CD4-positive, alpha-beta T cell (primary cell): ENCODE measurements at regions of chr19 and their contacts with region 1.

Region 1: GRCh38 chr19:1884719-1885334 is 469 bp downstream of the ABHD17A start:
- DNase-seq: peak in 2 of 14 experiments; percentile 40 to 55
- ATAC-seq: no peak
- H3K4me3 ChIP-seq: peak overlapping the region; percentile 100
- H3K4me3 Mint-ChIP-seq: peak overlapping the region; percentile 99
- H3K27ac ChIP-seq: peak overlapping the region; percentile 90 to 94
- H3K27ac Mint-ChIP-seq: peak overlapping the region; percentile 100
- H3K4me1 ChIP-seq: peaks cover 48% of the 10 kb centered on the region
- H3K4me1 Mint-ChIP-seq: peaks cover 40% of the 10 kb centered on the region
- H3K27me3 ChIP-seq: no peaks in the 10 kb centered on the region
- H3K27me3 Mint-ChIP-seq: no peaks in the 10 kb centered on the region
- CTCF ChIP-seq: no peak

Region 2: DNA sequence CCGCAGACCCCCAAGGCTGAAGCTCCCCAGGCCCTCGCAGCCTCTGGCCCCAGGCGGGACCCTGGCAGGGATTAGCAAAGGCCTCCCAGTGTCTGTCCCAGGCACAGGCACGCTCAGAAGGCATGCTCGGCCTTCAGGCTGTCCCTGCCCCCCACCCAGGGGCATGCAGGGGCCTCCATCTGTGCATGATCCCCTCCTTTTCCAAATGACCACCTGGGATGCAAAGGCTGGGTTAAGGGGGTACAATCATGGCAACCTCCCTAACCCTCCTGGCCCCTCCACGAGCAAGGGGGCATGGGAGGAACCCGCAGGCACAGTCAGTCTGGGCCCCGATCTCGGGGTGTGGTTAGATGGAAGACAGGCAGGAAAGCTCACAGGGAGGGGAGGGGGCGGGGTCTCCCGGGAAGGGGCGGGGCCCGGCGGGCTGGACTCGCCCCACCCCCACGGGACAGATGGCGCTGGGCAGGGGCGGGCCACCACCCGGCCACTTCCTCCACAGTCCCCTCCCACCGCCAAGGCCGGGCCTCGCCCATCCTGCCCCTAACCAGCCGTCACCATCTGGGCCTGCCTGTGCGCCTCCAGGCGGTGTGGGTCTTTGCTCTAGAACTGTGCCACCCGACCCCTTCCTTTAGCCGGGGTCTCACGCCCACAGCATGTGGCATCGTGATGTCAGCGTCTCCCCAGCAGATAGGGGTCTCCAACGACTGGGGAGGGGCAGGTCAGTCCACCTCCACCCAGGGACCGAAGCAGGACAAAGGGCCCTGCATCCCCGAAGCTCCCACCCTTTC is 29.6 kb before region 1 on chr19:
- CTCF ChIA-PET with region 1: no interaction called
- POLR2A ChIA-PET with region 1: interaction called, 11 read pairs
- intact Hi-C with region 1: no loop called
- DNase-seq: peak; percentile 61 to 95 (median 82)
- ATAC-seq: peak; percentile 56
- H3K4me3 ChIP-seq: peak overlapping the region; percentile 61
- H3K4me3 Mint-ChIP-seq: peak overlapping the region; percentile 91
- H3K27ac ChIP-seq: peak overlapping the region; percentile 71 to 77
- H3K27ac Mint-ChIP-seq: peak overlapping the region; percentile 96
- H3K4me1 ChIP-seq: peaks cover 89% of the 10 kb centered on the region
- H3K4me1 Mint-ChIP-seq: peaks cover 64% of the 10 kb centered on the region
- H3K27me3 ChIP-seq: no peaks in the 10 kb centered on the region
- H3K27me3 Mint-ChIP-seq: no peaks in the 10 kb centered on the region
- CTCF ChIP-seq: no peak

Region 3: DNA sequence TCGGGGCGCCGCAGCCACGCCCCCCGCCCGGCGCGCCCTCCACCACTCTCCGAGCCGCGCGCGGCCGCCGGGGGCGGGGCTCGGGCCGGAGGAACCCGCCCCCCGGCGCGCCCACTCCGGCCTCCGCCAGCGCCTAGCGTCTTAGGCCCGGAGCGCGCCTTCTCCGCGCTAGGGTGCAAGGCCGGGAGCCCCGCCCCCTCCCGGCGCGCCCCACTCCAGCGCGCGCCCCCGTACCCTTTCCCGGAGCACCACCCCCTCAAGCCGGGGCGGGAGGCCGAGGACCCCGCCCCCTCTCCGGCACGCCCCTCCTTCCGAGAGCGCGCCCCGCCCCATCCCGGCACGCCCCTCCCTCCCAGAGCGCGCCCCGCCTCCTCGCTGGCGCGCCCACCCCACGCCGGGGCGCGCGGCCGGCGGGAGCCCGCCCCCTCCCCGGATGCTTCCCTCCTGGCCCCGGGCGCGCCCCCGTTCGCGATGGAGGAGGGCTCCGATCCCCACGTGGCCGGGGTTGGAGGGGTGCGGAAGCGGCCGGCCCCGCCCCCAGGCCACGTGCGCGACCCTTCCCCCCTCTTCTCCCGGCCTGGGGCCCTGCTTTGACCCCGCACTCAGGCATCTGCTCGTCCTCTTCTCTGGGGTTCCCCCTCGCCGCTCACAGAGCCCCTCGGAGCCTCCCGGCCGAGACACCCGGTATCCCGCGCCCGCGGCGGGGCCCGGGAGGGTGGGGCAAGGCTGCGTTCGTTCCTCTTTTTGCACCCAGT is 20.9 kb before region 1 on chr19:
- CTCF ChIA-PET with region 1: interaction called, 3 read pairs
- POLR2A ChIA-PET with region 1: interaction called, 9 read pairs
- intact Hi-C with region 1: loop called in 1 of 2 experiments (anchors 1 kb)
- DNase-seq: peak; percentile 83 to 97 (median 92)
- ATAC-seq: peak; percentile 66
- H3K4me3 ChIP-seq: peak overlapping the region; percentile 83
- H3K4me3 Mint-ChIP-seq: peak overlapping the region; percentile 90
- H3K27ac ChIP-seq: peak overlapping the region; percentile 67 to 89
- H3K27ac Mint-ChIP-seq: peak overlapping the region; percentile 63
- H3K4me1 ChIP-seq: peaks cover 47% of the 10 kb centered on the region
- H3K4me1 Mint-ChIP-seq: peaks cover 41% of the 10 kb centered on the region
- H3K27me3 ChIP-seq: no peaks in the 10 kb centered on the region
- H3K27me3 Mint-ChIP-seq: no peaks in the 10 kb centered on the region
- CTCF ChIP-seq: no peak

Region 4: GRCh38 chr19:1896508-1896907 is 11.7 kb after region 1 on chr19:
- CTCF ChIA-PET with region 1: interaction called, 12 read pairs
- POLR2A ChIA-PET with region 1: interaction called, 29 read pairs
- intact Hi-C with region 1: loop called in 1 of 2 experiments (anchors 1 kb)
- DNase-seq: no peak
- ATAC-seq: no peak
- H3K4me3 ChIP-seq: no peak overlapping the region
- H3K4me3 Mint-ChIP-seq: peak overlapping the region; percentile 54
- H3K27ac ChIP-seq: no peak overlapping the region
- H3K27ac Mint-ChIP-seq: peak overlapping the region; percentile 88
- H3K4me1 ChIP-seq: peaks cover 40% of the 10 kb centered on the region
- H3K4me1 Mint-ChIP-seq: peaks cover 26% of the 10 kb centered on the region
- H3K27me3 ChIP-seq: no peaks in the 10 kb centered on the region
- H3K27me3 Mint-ChIP-seq: no peaks in the 10 kb centered on the region
- CTCF ChIP-seq: no peak

Region 5: GRCh38 chr19:1905071-1905862 is 20.4 kb after region 1 on chr19 and contains the starts of genes ADAT3 and SCAMP4:
- CTCF ChIA-PET with region 1: no interaction called
- POLR2A ChIA-PET with region 1: interaction called, 5 read pairs
- intact Hi-C with region 1: loop called in 1 of 2 experiments (anchors 1 kb)
- DNase-seq: peak; percentile 97 to 99 (median 99)
- ATAC-seq: peak; percentile 98
- H3K4me3 ChIP-seq: peak within 1 kb of the TSS; percentile 65
- H3K4me3 Mint-ChIP-seq: peak within 1 kb of the TSS; percentile 93
- H3K27ac ChIP-seq: peak within 1 kb of the TSS; percentile 72
- H3K27ac Mint-ChIP-seq: peak within 1 kb of the TSS; percentile 78
- H3K4me1 ChIP-seq: peaks cover 51% of the 10 kb centered on the region
- H3K4me1 Mint-ChIP-seq: peaks cover 40% of the 10 kb centered on the region
- H3K27me3 ChIP-seq: no peaks in the 10 kb centered on the region
- H3K27me3 Mint-ChIP-seq: no peaks in the 10 kb centered on the region
- CTCF ChIP-seq: no peak
- total RNA-seq, gene ADAT3: 7.9 to 8.2 TPM
- total RNA-seq, gene SCAMP4: 12.7 to 15.4 TPM

Region 6: GRCh38 chr19:2084993-2085720 is 200.3 kb after region 1 on chr19:
- CTCF ChIA-PET with region 1: no interaction called
- POLR2A ChIA-PET with region 1: no interaction called
- intact Hi-C with region 1: loop called in 1 of 2 experiments (anchors 5 kb)
- DNase-seq: peak; percentile 83 to 99 (median 92)
- ATAC-seq: peak; percentile 59
- H3K4me3 ChIP-seq: peak overlapping the region; percentile 99
- H3K4me3 Mint-ChIP-seq: peak overlapping the region; percentile 93
- H3K27ac ChIP-seq: peak overlapping the region; percentile 97 to 98
- H3K27ac Mint-ChIP-seq: peak overlapping the region; percentile 97
- H3K4me1 ChIP-seq: peaks cover 85% of the 10 kb centered on the region
- H3K4me1 Mint-ChIP-seq: peaks cover 75% of the 10 kb centered on the region
- H3K27me3 ChIP-seq: no peaks in the 10 kb centered on the region
- H3K27me3 Mint-ChIP-seq: no peaks in the 10 kb centered on the region
- CTCF ChIP-seq: no peak